Heart left ventricle (tissue), 16 donors: ENCODE measurements at regions of chr10 and their contacts with region 1.

Region 1: GRCh38 chr10:107814865-107815487 is 650.5 kb upstream of the SORCS1 start:
- DNase-seq: peak in 3 of 5 donors; percentile 26 to 35 (median 28)
- ATAC-seq: peak in 2 of 4 donors; percentile 64 to 68
- H3K4me3 ChIP-seq: no peak overlapping the region
- H3K27ac ChIP-seq: no peak overlapping the region
- H3K4me1 ChIP-seq: no peaks in the 10 kb centered on the region
- H3K27me3 ChIP-seq: no peaks in the 10 kb centered on the region
- CTCF ChIP-seq: peak; percentile 17 to 69 (median 51)
- POLR2A ChIP-seq: no peak

Region 2: DNA sequence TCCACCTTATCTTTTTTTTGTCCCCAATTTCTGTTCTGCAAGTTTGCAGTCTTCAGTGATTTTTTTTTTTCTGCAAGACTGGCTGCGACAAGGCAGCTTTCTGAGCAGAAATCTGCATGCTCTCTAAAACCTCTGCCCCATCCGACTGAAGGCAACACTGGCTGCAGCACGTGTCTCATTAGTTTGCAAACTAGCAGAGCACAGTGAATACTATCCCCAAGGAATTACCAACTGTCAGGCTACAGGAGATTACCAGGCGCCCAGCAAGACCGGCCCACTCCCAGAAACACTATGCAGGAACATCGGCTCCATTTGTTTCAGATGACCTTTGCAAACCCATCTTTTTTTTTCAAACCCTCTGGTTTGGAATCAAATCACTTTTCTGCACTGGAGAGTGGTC is 1189.2 kb before region 1 on chr10:
- intact Hi-C with region 1: loop called in 4 of 10 experiments (anchors 5 to 10 kb)
- DNase-seq: no peak
- ATAC-seq: no peak
- H3K4me3 ChIP-seq: no peak overlapping the region
- H3K27ac ChIP-seq: no peak overlapping the region
- H3K4me1 ChIP-seq: no peaks in the 10 kb centered on the region
- H3K27me3 ChIP-seq: peaks cover 0 to 11% (median 0%) of the 10 kb centered on the region in 9 donors
- CTCF ChIP-seq: no peak
- POLR2A ChIP-seq: no peak

Region 3: GRCh38 chr10:106705681-106706100 is 1109.3 kb before region 1 on chr10:
- intact Hi-C with region 1: loop called in 7 of 10 experiments (anchors 2 to 10 kb)
- DNase-seq: peak in 4 of 5 donors; percentile 33 to 49 (median 43)
- ATAC-seq: peak in 3 of 4 donors; percentile 55 to 77 (median 60)
- H3K4me3 ChIP-seq: peak overlapping the region in 4 of 12 donors; percentile 11 to 40 (median 37)
- H3K27ac ChIP-seq: no peak overlapping the region
- H3K4me1 ChIP-seq: no peaks in the 10 kb centered on the region
- H3K27me3 ChIP-seq: peaks cover 0 to 11% (median 0%) of the 10 kb centered on the region in 9 donors
- CTCF ChIP-seq: peak; percentile 57 to 79 (median 74)
- POLR2A ChIP-seq: no peak

Region 4: DNA sequence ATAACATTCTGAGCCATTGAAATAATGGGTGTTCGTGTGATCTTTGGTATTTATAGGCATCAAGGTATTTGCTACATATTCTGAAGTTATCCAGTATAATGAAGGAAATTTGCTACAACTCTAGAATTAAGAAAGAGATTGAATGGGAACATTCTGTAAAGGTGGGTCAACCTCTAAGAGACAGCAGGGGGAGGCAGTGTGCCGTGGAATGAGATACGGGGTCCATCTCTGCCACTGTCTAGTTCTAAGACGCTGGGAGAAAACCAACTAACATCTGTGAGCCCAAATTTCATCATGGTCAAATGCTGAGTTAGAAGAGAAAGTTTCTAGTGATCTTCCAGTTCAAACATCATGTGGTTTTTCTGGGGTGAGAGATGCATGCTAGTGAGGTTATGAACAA is 1019.4 kb before region 1 on chr10:
- intact Hi-C with region 1: loop called in 5 of 10 experiments (anchors 5 to 10 kb)
- DNase-seq: peak in 2 of 5 donors; percentile 18 to 36
- ATAC-seq: peak in 3 of 4 donors; percentile 62 to 77 (median 75)
- H3K4me3 ChIP-seq: no peak overlapping the region
- H3K27ac ChIP-seq: no peak overlapping the region
- H3K4me1 ChIP-seq: no peaks in the 10 kb centered on the region
- H3K27me3 ChIP-seq: no peaks in the 10 kb centered on the region
- CTCF ChIP-seq: peak; percentile 18 to 57 (median 42)
- POLR2A ChIP-seq: no peak

Region 5: DNA sequence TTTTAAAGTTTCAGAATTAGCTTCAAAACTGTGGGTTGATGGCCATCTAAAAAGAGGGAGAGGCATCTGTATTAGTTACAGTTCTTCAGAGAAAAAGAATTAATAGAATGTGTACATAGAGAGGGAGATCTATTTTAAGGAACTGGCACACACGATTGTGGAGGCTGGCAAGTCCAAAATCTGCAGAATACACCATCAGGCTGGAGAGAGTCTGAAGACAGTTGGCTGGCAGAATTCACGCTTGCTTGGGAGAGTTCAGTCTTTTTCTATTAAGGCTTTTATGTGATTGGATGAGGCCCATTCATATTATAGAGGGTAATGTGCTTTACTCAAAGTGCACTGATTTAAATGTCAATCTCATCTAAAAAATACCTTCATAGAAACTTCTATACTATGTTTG is 515.4 kb before region 1 on chr10:
- intact Hi-C with region 1: no loop called
- DNase-seq: no peak
- ATAC-seq: no peak
- H3K4me3 ChIP-seq: no peak overlapping the region
- H3K27ac ChIP-seq: no peak overlapping the region
- H3K4me1 ChIP-seq: no peaks in the 10 kb centered on the region
- H3K27me3 ChIP-seq: no peaks in the 10 kb centered on the region
- CTCF ChIP-seq: no peak
- POLR2A ChIP-seq: no peak

Region 6: GRCh38 chr10:107409522-107409921 is 405.5 kb before region 1 on chr10:
- intact Hi-C with region 1: loop called in 6 of 10 experiments (anchors 5 to 10 kb)
- DNase-seq: no peak
- ATAC-seq: no peak
- H3K4me3 ChIP-seq: no peak overlapping the region
- H3K27ac ChIP-seq: no peak overlapping the region
- H3K4me1 ChIP-seq: no peaks in the 10 kb centered on the region
- H3K27me3 ChIP-seq: peaks cover 0 to 4% (median 0%) of the 10 kb centered on the region in 9 donors
- CTCF ChIP-seq: peak in 5 of 12 donors; percentile 17 to 43 (median 35)
- POLR2A ChIP-seq: no peak

Region 7: GRCh38 chr10:107418407-107418806 is 396.6 kb before region 1 on chr10:
- intact Hi-C with region 1: loop called in 3 of 10 experiments (anchors 5 to 10 kb)
- DNase-seq: no peak
- ATAC-seq: no peak
- H3K4me3 ChIP-seq: no peak overlapping the region
- H3K27ac ChIP-seq: peak overlapping the region in 1 of 12 donors; percentile 0
- H3K4me1 ChIP-seq: no peaks in the 10 kb centered on the region
- H3K27me3 ChIP-seq: peaks cover 0 to 4% (median 0%) of the 10 kb centered on the region in 9 donors
- CTCF ChIP-seq: no peak
- POLR2A ChIP-seq: no peak

Region 8: GRCh38 chr10:107671960-107672359 is 143.0 kb before region 1 on chr10:
- intact Hi-C with region 1: no loop called
- DNase-seq: no peak
- ATAC-seq: no peak
- H3K4me3 ChIP-seq: no peak overlapping the region
- H3K27ac ChIP-seq: no peak overlapping the region
- H3K4me1 ChIP-seq: no peaks in the 10 kb centered on the region
- H3K27me3 ChIP-seq: no peaks in the 10 kb centered on the region
- CTCF ChIP-seq: no peak
- POLR2A ChIP-seq: no peak

Region 9: GRCh38 chr10:108410236-108410635 is 595.3 kb after region 1 on chr10:
- intact Hi-C with region 1: no loop called
- DNase-seq: no peak
- ATAC-seq: no peak
- H3K4me3 ChIP-seq: no peak overlapping the region
- H3K27ac ChIP-seq: no peak overlapping the region
- H3K4me1 ChIP-seq: no peaks in the 10 kb centered on the region
- H3K27me3 ChIP-seq: no peaks in the 10 kb centered on the region
- CTCF ChIP-seq: no peak
- POLR2A ChIP-seq: no peak